HCT116 (cell line): ENCODE measurements at regions of chr4 and their contacts with region 1.

Region 1: DNA sequence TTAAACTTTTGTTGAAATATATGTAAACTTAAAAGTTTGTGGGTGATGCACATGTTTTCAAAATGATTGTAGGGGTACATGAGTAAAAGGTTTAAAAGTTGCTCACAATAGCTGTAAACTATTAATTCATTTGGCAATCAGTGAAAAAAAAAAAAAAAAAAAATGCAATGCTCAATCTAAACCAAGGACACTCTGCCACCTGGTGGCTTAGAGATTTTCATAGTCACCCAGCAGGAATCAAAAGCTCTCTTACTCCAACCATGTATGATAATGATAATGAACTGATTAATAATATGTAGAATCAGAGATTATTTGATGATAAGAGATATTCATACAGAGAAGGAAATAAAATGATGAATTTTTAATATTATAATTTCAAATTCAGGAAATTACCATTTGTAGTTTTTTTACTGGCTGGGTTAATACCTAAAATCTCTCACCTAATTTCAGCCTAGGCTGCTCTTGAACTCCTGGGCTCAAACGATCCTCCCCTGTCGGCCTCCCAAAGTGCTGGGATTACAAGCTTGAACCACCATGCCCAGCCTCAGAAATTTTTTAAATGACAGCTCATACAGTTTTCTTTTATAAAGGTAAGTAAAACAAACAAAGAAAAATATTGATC is 46.9 kb upstream of the SLC25A4 start:
- DNase-seq: peak; percentile 34
- ATAC-seq: peak; percentile 75
- H3K4me3 ChIP-seq: no peak overlapping the region
- H3K27ac ChIP-seq: no peak overlapping the region
- H3K4me1 ChIP-seq: no peaks in the 10 kb centered on the region; a peak in 1 of 4 replicates
- H3K27me3 ChIP-seq: no peaks in the 10 kb centered on the region
- CTCF ChIP-seq: peak; percentile 58 to 74 (median 71)
- POLR2A ChIP-seq: no peak
- RAD21 ChIP-seq: peak; percentile 80

Region 2: DNA sequence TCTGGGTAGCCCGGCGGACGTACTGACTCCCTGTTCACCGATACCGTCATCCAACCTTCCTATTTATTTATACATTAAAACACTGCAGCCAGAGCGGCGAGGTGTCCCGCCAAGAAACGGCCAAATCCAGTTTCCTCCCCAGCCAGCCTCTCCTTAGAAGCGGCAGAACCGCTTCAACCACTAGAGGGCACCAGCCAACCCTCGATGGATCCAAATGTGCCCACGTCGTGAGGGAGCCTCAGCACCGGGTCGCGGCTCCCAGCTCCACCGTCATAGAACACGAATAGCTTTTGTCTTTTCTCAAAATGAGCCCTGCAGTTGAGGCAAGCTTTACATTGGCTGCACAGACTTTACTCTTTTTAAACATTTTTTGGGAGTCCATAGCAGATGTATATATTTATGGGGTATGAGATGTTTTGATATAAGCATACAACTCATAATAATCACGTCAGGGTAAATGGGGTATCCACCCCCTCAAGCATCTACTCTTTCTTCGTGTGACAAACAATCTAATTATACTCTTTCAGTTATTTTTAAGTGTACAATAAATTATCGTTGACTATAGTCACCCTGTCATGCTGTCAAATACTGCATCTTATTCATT is 90.8 kb before region 1 on chr4:
- CTCF ChIA-PET with region 1: interaction called, 50 read pairs
- POLR2A ChIA-PET with region 1: interaction called, 3 read pairs
- RAD21 ChIA-PET with region 1: interaction called, 3 to 4 read pairs
- intact Hi-C with region 1: loop called (anchors 1 kb)
- DNase-seq: peak; percentile 72
- ATAC-seq: peak; percentile 97
- H3K4me3 ChIP-seq: peak overlapping the region; percentile 13 to 38
- H3K27ac ChIP-seq: no peak overlapping the region
- H3K4me1 ChIP-seq: peaks cover 3 to 7% of the 10 kb centered on the region in 2 experiments; a peak in 2 of 4 replicates
- H3K27me3 ChIP-seq: no peaks in the 10 kb centered on the region
- CTCF ChIP-seq: peak; percentile 89 to 95 (median 93)
- POLR2A ChIP-seq: no peak
- RAD21 ChIP-seq: peak; percentile 95

Region 3: GRCh38 chr4:185082561-185082960 is 13.6 kb before region 1 on chr4:
- CTCF ChIA-PET with region 1: interaction called, 16 read pairs
- POLR2A ChIA-PET with region 1: no interaction called
- RAD21 ChIA-PET with region 1: no interaction called
- intact Hi-C with region 1: no loop called
- DNase-seq: no peak
- ATAC-seq: no peak
- H3K4me3 ChIP-seq: no peak overlapping the region
- H3K27ac ChIP-seq: no peak overlapping the region
- H3K4me1 ChIP-seq: peaks cover 0 to 5% of the 10 kb centered on the region in 2 experiments; a peak in 1 of 4 replicates
- H3K27me3 ChIP-seq: no peaks in the 10 kb centered on the region
- CTCF ChIP-seq: no peak
- POLR2A ChIP-seq: no peak
- RAD21 ChIP-seq: no peak

Region 4: DNA sequence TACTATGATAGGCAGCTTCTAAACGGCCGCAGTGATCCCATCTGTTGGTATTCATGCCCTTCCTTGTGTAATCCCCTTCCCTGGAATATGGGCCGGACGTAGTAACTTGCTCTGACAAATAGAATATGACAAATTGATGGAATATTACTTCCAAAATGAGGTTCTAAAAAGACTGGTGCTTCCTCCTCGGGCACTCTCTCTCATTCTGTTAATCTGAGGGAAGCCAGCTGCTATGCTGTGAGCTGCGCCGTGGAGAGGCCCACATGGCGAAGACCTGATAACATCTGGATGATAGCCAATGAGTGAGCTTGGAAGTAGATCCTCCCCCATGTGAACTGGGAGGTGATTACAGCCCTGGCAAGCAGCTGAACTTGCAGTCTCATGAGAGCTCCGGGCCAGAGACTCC is 19.7 kb after region 1 on chr4:
- CTCF ChIA-PET with region 1: interaction called, 11 read pairs
- POLR2A ChIA-PET with region 1: no interaction called
- RAD21 ChIA-PET with region 1: no interaction called
- intact Hi-C with region 1: no loop called
- DNase-seq: no peak
- ATAC-seq: no peak
- H3K4me3 ChIP-seq: no peak overlapping the region
- H3K27ac ChIP-seq: no peak overlapping the region
- H3K4me1 ChIP-seq: peaks cover 27 to 51% of the 10 kb centered on the region in 2 experiments
- H3K27me3 ChIP-seq: no peaks in the 10 kb centered on the region
- CTCF ChIP-seq: no peak
- POLR2A ChIP-seq: no peak
- RAD21 ChIP-seq: no peak